Panc1 (cell line): ENCODE measurements at regions of chr6 and their contacts with region 1.

Region 1: DNA sequence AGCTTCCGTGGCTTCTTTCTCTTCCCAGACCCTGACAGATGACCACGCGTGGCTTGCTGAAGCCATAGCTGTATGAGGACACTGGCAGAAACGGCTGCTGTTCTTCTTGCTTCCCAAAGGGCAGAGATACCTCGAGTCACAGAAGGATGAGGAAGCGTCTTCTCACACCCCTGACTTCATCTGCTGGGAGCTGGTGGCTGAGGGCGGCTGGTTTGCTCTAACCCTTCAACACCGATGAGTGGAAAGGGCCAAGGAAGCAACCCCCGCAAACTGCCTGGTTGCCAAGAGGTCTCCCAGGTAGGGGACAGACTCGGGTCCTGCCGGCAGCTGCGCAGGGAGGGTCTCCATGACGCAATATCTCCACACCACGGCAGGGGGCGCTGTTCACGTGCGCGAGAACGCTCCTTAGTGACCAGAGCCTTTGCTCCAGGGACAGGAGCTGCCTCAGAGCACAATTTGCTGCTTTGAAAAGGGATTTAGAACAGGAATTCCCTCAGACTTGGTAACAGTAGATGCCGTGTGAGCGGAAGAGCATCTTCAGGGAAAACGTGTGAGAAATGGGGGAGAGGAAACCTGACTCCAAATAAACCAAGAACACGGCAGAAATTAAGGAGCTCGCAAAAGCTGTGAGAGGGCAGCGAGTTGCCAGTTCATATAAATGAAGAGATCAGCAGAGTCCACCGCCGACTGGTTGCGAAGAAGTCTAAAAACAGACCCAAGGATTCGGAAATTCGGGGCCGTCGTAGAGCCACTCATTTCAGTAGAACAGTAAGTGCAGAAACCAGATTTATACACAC is 80.2 kb downstream of the ERMARD start:
- DNase-seq: peak; percentile 41
- ATAC-seq: peak; percentile 91
- H3K4me3 ChIP-seq: no peak overlapping the region
- H3K27ac ChIP-seq: no peak overlapping the region
- H3K4me1 ChIP-seq: no peaks in the 10 kb centered on the region
- H3K27me3 ChIP-seq: peaks cover 33% of the 10 kb centered on the region
- CTCF ChIP-seq: peak; percentile 98

Region 2: DNA sequence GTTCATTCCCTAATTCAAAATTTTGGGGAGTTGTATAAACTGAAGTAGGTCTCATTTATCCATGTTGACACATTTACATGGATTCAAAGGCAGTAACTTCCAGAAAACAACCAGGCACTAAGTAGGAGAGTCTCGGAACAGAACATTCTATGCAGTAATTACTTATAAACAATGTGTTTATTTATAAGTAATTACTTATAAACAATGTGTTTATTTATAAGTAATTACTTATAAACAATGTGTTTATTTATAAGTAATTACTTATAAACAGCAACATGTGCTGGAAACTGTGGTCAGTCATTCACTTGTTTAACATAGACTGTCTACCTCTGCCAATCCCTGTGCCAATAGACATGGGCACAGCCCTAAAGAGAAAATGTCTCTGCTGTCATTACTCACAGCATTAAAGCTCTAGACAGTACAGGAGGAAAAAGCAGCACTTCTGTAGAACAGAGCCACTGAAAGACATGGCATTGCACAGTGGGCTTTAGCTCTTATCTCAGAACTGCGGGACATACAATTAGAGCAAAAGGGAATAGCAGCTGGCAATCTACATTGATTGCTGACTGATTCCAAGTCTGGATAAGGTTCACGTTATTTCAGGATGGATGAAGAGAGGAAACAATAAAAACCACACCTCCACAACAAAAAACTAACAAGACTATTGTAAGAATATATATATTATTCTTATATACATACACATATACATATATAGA is 318.0 kb before region 1 on chr6:
- CTCF ChIA-PET with region 1: no interaction called
- POLR2A ChIA-PET with region 1: no interaction called
- in situ Hi-C with region 1: no loop called
- intact Hi-C with region 1: no loop called
- DNase-seq: no peak
- ATAC-seq: no peak
- H3K4me3 ChIP-seq: no peak overlapping the region
- H3K27ac ChIP-seq: no peak overlapping the region
- H3K4me1 ChIP-seq: no peaks in the 10 kb centered on the region
- H3K27me3 ChIP-seq: no peaks in the 10 kb centered on the region
- CTCF ChIP-seq: no peak

Region 3: GRCh38 chr6:169803271-169803811 is 28.3 kb before region 1 on chr6:
- CTCF ChIA-PET with region 1: interaction called, 27 read pairs
- POLR2A ChIA-PET with region 1: no interaction called
- in situ Hi-C with region 1: no loop called
- intact Hi-C with region 1: no loop called
- DNase-seq: no peak
- ATAC-seq: no peak
- H3K4me3 ChIP-seq: no peak overlapping the region
- H3K27ac ChIP-seq: 0 out of 2 replicates have a peak overlapping the region, but pooled peaks have one; percentile 20
- H3K4me1 ChIP-seq: peaks cover 33% of the 10 kb centered on the region
- H3K27me3 ChIP-seq: no peaks in the 10 kb centered on the region; the same call in 1 of the 2 replicates
- CTCF ChIP-seq: no peak

Region 4: DNA sequence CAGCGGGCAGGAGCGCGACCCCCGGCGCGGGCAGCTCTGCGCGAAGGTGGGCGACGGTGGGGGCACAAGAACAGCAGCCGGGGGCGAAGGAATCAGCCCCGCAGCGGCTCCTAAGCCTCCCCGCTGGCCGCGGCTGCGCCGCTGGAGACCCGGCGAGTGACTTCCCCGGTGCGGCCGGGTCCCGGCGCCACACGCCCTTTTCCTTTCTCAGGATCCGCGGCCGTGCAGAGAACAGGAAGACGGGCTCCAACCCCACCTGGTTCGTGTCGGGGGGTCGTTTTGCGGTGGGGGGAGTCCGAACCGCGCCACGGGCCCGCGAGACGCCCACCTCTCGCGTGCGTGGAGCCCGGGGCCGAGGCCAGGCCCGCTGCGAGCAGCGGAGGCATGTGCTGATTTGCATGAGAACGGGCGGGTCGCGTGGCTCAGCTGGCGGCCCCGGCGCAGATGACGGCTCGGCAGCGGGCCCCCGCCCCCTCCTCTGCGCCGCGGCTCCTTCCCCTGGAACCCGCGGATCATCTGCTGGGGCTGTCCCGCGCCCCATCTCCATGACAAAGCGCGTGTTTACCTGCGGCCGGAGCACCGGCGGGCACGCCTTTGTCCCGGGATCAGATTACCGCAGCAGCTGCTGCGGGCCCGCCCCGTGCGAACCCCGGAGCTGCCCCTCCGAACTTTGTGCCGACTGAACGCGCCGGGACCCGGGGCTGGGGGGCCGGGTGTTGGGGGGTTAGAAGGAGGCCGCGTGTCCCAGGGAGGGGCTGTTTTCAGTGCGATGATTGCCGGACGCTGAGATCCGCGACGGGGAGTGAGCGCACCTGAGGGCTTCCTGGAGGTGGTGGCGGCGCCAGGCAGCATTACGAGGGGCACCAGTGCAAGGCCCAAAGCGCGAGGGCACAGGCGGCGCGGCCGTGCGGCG is 464.1 kb after region 1 on chr6:
- CTCF ChIA-PET with region 1: interaction called, 18 read pairs
- POLR2A ChIA-PET with region 1: no interaction called
- in situ Hi-C with region 1: no loop called
- intact Hi-C with region 1: loop called (anchors 2 kb)
- DNase-seq: no peak
- ATAC-seq: peak; percentile 30; the same call in 1 of the 2 replicates
- H3K4me3 ChIP-seq: peak overlapping the region; percentile 44 to 54
- H3K27ac ChIP-seq: no peak overlapping the region
- H3K4me1 ChIP-seq: peaks cover 11% of the 10 kb centered on the region
- H3K27me3 ChIP-seq: peaks cover 41% of the 10 kb centered on the region
- CTCF ChIP-seq: no peak